ENCODE measurements at regions of chr1 and their contacts with region 1.

Region 1: DNA sequence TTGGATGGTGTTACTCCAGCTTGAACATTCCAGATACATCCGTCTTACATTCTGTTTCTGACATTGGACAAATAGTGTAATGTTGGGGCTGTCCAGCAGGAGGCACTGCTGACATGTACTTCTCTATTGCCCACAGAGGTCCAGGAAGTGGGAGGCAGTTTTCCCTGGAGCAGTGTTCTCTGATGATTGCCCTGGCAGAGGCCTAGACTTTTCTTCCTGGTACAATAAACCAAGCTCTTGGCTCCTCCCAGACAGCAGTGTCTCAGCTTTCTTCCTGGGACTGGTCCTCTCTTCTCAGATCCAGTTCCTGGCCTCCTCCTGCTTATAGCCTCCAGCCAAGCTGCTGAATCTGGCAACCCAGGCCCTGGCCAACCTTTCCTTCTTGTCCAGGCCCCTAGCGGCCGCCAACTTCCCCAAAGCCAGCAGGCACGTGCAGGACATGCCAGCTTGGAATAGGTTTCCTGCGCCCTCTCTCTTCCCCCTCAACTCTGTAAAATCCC is 14.9 kb upstream of the IFNLR1 start:
- DNase-seq: peak; percentile 98
- H3K4me3 Mint-ChIP-seq: no peak overlapping the region
- H3K27ac Mint-ChIP-seq: no peak overlapping the region
- H3K4me1 Mint-ChIP-seq: peaks cover 21% of the 10 kb centered on the region
- H3K27me3 Mint-ChIP-seq: no peaks in the 10 kb centered on the region
- CTCF ChIP-seq: peak; percentile 89

Region 2: DNA sequence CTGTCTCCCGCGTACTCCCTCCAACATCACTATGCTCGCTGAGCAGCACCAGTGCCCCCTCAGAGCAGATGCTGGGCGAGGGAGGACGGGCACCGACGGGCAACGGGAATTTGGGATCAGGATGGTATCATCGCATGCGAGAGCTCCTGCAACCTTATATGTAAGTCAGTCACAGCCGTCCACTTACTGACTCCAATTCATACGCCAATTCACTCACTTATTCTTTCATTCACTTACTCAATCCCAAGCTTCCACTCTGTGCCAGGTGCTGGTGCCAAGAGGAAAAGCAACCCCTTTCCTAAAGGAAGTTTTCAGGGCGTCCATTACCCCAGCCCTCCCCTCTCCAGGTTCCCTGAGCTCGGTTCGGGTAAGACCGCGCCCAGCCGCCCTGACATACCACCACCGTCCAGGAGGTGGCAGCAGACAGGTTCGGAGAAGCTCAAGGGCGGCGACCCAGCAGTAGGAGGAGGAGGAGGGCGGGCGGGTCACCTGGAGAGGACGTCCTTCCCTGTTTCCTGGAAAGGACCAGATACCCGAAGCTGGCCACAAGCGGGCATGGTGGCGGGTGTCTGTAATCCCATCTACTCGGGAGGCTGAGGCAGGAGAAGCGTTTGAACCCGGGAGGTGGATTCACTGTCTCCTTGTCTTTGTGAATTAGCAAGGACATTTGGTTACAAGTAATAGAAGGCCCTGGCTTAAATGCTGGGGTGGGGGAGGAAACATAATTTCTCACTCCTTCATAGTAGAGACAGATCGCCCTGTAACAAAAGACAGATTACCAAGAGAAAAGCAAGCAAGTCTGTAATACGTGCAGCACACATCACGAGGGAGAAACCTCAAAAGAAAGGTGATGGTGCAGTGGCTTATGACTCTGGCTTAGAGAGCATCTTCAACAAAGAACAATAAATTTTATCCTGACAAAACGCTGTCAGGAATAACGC is 51.5 kb before region 1 on chr1:
- CTCF ChIA-PET with region 1: interaction called, 54 read pairs
- POLR2A ChIA-PET with region 1: interaction called, 9 read pairs
- intact Hi-C with region 1: loop called (anchors 1 kb)
- DNase-seq: peak; percentile 90
- H3K4me3 Mint-ChIP-seq: peak overlapping the region; percentile 58
- H3K27ac Mint-ChIP-seq: peak overlapping the region; percentile 3
- H3K4me1 Mint-ChIP-seq: peaks cover 20% of the 10 kb centered on the region
- H3K27me3 Mint-ChIP-seq: no peaks in the 10 kb centered on the region
- CTCF ChIP-seq: peak; percentile 81

Region 3: GRCh38 chr1:24235921-24236781 is 34.2 kb after region 1 on chr1:
- CTCF ChIA-PET with region 1: interaction called, 6 read pairs
- POLR2A ChIA-PET with region 1: interaction called, 12 read pairs
- intact Hi-C with region 1: no loop called
- DNase-seq: peak; percentile 83
- H3K4me3 Mint-ChIP-seq: no peak overlapping the region
- H3K27ac Mint-ChIP-seq: peak overlapping the region; percentile 73
- H3K4me1 Mint-ChIP-seq: peaks cover 24% of the 10 kb centered on the region
- H3K27me3 Mint-ChIP-seq: no peaks in the 10 kb centered on the region
- CTCF ChIP-seq: no peak

Region 4: DNA sequence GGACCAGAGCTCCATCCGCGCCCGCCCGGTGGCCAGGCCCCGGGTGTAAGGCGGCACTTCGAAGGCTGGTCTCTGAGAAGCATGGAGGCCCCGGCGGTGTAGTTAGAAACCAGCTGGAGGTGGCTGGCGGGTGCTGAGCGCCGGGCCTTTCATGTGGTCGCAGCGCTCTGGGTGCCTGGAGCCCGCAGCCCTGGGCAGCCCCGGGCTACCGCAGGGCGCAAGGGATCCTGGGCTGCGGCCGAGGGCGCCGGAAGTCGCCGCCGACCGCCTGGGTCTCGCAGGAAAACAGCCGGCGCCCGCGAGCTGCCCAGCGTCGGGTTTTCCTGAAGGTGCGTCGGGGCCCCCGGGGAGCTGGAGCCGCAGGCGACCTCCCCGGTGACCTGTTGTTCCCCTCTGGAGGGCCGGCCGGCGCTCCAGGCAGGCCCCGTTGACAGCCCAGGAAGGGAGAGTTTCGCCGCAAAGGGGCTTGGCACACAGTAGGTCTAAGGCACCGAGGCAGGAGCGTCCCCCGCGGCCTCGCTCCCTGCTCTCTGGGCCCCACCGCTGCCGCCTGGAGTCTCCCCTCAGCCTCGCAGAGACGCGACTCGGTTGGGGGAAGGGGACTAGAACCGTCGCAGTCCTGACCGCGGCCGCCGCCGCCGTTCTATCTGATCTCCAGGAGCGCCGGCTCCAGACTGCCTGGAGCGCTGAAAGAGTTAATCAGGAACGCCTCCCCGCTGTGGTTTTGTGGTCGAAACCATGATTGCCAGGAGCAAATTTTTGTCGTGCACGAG is 119.9 kb after region 1 on chr1:
- CTCF ChIA-PET with region 1: interaction called, 42 read pairs
- POLR2A ChIA-PET with region 1: interaction called, 43 read pairs
- intact Hi-C with region 1: loop called (anchors 1 kb)
- DNase-seq: peak; percentile 95
- H3K4me3 Mint-ChIP-seq: peak overlapping the region; percentile 74
- H3K27ac Mint-ChIP-seq: peak overlapping the region; percentile 87
- H3K4me1 Mint-ChIP-seq: peaks cover 64% of the 10 kb centered on the region
- H3K27me3 Mint-ChIP-seq: no peaks in the 10 kb centered on the region
- CTCF ChIP-seq: no peak

Region 5: DNA sequence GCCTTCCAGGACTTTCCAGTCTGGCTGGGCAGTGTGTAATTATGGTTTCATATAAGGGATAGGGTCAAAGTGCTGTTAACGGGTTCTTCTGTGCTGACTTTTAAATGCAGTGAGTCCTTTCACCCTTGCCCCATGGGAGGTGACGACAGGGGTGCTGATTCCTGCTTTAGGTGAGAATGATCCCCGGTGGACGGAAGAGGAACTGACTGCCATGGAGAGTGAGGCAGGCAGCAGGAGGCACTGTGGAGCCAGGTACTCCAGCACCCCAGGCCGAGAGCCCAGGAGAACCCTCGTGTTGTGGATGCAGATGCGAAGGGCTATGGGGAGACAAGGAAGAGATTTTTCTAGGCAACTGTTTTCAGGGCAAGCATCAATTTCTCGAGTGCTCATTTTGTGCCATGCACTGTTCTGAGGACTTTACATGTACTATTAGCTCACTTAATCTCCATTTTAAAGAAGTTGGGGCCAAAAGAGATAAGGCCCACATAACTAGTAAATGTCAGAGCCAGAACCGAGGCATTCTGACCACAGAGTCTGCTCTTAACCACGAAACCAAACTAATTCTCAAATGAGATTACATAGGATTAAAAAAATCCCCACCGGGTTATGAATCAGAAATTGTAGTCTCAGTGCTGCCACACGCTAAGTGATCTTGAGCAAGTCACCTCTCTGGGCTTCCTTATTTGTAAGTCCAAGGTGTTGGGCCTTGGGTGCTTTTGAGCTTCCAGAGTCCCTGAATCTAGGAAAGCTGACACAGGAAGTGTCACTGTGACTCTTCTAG is 183.4 kb after region 1 on chr1:
- CTCF ChIA-PET with region 1: interaction called, 365 read pairs
- POLR2A ChIA-PET with region 1: interaction called, 155 read pairs
- intact Hi-C with region 1: no loop called
- DNase-seq: peak; percentile 79
- H3K4me3 Mint-ChIP-seq: no peak overlapping the region
- H3K27ac Mint-ChIP-seq: peak overlapping the region; percentile 84
- H3K4me1 Mint-ChIP-seq: peaks cover 66% of the 10 kb centered on the region
- H3K27me3 Mint-ChIP-seq: no peaks in the 10 kb centered on the region
- CTCF ChIP-seq: peak; percentile 53

Region 6: GRCh38 chr1:24415334-24415909 is 213.4 kb after region 1 on chr1 and contains the start of gene NIPAL3:
- CTCF ChIA-PET with region 1: interaction called, 17 read pairs
- POLR2A ChIA-PET with region 1: interaction called, 13 read pairs
- intact Hi-C with region 1: no loop called
- DNase-seq: peak; percentile 99
- H3K4me3 Mint-ChIP-seq: peak within 1 kb of the TSS; percentile 93
- H3K27ac Mint-ChIP-seq: peak within 1 kb of the TSS; percentile 98
- H3K4me1 Mint-ChIP-seq: peaks cover 45% of the 10 kb centered on the region
- H3K27me3 Mint-ChIP-seq: no peaks in the 10 kb centered on the region
- CTCF ChIP-seq: peak; percentile 84
- total RNA-seq, gene NIPAL3: 47.7 and 55.8 TPM in 2 replicates

Region 7: GRCh38 chr1:24635195-24635843 is 433.3 kb after region 1 on chr1:
- CTCF ChIA-PET with region 1: interaction called, 88 read pairs
- POLR2A ChIA-PET with region 1: no interaction called
- intact Hi-C with region 1: no loop called
- DNase-seq: peak; percentile 72
- H3K4me3 Mint-ChIP-seq: no peak overlapping the region
- H3K27ac Mint-ChIP-seq: no peak overlapping the region
- H3K4me1 Mint-ChIP-seq: peaks cover 12% of the 10 kb centered on the region
- H3K27me3 Mint-ChIP-seq: peaks cover 22% of the 10 kb centered on the region
- CTCF ChIP-seq: peak; percentile 44

Measured in MCF 10A (cell line).